ENCODE measurements at regions of chr11 and their contacts with region 1.

Region 1: GRCh38 chr11:27506200-27507182 is at the start of gene LIN7C:
- H3K4me3 Mint-ChIP-seq: peak within 1 kb of the TSS; percentile 98
- H3K27ac Mint-ChIP-seq: peak within 1 kb of the TSS; percentile 97
- H3K4me1 Mint-ChIP-seq: peaks cover 38% of the 10 kb centered on the region
- H3K27me3 Mint-ChIP-seq: no peaks in the 10 kb centered on the region

Region 2: DNA sequence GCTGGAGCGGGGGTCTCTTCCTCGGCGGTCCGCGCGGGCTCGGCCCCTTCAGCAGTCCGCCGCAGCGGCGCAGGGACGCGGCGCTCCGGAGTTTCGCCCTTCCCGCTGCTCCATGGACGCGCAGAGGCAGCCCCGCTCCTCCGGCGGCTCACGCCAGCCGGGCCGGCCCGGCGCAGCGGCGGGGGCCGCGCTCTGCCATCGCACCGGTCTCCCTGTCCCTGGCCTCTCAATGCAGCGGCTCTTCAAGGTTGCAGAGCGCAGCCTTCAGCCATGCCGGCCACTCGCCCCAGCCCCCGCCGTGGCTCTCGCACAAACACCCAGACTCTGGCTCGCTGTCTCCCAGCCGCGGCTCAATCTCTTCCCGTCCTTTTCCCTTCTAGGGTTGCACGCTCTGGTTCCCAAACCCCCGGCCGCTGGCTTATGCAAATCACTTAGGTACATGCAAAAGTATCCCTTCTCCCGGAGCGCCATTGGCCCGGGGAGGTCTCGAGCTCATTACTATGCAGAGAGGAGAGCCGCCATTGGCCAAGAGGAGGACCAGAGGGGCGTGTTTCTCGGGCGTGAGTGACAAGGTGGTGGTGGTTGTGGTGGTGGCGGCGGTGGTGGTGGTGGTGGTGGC is 34.0 kb before region 1 on chr11 and contains the start of gene LGR4:
- intact Hi-C with region 1: loop called (anchors 2 kb)
- H3K4me3 Mint-ChIP-seq: peak within 1 kb of the TSS; percentile 87
- H3K27ac Mint-ChIP-seq: peak within 1 kb of the TSS; percentile 82
- H3K4me1 Mint-ChIP-seq: peaks cover 24% of the 10 kb centered on the region
- H3K27me3 Mint-ChIP-seq: peaks cover 26% of the 10 kb centered on the region

Region 3: GRCh38 chr11:27482793-27483192 is 23.7 kb before region 1 on chr11:
- intact Hi-C with region 1: no loop called
- H3K4me3 Mint-ChIP-seq: no peak overlapping the region
- H3K27ac Mint-ChIP-seq: no peak overlapping the region
- H3K4me1 Mint-ChIP-seq: no peaks in the 10 kb centered on the region
- H3K27me3 Mint-ChIP-seq: no peaks in the 10 kb centered on the region

Measured in dendritic cell treated with granulocyte-macrophage colony-stimulating factor and Interleukin-4, amounts not matched to agents 40 ng/mL and 50 ng/mL, for 4 days (primary cell).